ENCODE measurements at regions of chr3 and their contacts with region 1.

Region 1: DNA sequence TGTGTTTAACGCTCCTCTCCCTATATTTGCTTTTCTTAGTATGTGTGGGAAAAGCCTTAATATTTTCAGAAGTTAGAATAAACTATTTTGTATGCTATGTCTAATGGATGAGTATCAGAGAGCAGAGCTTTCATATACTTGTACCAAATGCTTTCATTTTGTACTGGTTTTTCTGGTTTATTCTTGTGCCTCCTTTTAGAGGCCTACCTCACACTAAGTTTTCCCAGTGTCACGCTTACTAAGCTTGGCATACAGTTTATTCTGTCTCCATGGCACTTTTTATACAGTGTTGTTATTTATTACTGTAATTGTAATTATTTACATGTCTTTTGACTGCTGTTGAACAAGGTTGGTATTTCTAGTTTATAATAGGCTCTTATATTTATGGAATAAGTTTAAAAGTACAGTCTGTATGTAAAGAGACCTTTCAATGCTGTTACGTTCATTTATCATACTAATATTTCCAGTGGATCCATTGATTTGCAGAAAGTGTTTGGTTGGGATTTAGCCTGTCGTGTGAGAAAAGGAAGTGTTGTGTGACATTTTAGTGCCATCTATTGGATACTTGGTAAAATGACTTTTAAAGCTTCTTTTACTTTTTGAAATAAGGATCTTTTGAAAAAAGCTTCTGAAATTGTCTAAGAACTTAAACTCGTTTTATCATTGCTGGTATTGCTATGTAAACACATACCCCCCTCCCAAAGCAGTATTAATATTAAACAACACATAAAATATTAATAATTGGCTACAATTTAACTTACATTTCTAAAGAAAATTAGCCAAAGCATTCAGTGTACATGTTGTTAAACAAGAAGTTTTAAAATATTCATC is 5.2 kb upstream of the EBLN2 start:
- DNase-seq: peak; percentile 36
- CTCF ChIP-seq: peak; percentile 27

Region 2: DNA sequence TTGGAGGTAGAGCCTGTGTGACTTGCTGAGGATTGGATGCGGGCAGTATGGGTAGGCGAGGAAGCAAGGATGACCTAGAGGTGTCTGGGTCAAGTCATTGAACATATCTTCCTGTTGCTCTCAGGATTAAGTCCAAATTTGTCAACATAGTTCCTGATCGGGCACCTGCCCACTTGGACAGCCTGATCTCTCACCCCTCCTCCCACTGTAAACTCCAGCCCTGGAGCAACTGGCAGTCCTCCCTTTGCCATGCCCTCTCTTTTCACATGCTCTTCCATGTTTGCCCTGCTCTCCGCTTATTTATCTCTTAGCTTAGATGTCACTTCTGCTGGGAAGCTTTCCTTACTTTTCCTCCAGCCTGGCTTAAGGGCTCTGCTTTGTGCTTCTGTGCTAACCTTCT is 107.2 kb before region 1 on chr3:
- in situ Hi-C with region 1: loop called (anchors 10 kb)
- DNase-seq: no peak
- CTCF ChIP-seq: no peak